B cell (primary cell): ENCODE measurements at regions of chr11 and their contacts with region 1.

Region 1: GRCh38 chr11:71372693-71373657 is 75.2 kb downstream of the DHCR7 start:
- DNase-seq: no peak
- ATAC-seq: no peak
- H3K4me3 ChIP-seq: peak overlapping the region in 2 of 5 experiments; percentile 46 to 49
- H3K4me3 Mint-ChIP-seq: peak overlapping the region; percentile 71
- H3K27ac ChIP-seq: no peak overlapping the region
- H3K27ac Mint-ChIP-seq: peak overlapping the region; percentile 62
- H3K4me1 ChIP-seq: peaks cover 62 to 69% of the 10 kb centered on the region in 2 donors
- H3K4me1 Mint-ChIP-seq: peaks cover 68% of the 10 kb centered on the region
- H3K27me3 ChIP-seq: peaks cover 0 to 16% (median 7%) of the 10 kb centered on the region in 4 experiments
- H3K27me3 Mint-ChIP-seq: peaks cover 24% of the 10 kb centered on the region
- CTCF ChIP-seq: no peak

Region 2: DNA sequence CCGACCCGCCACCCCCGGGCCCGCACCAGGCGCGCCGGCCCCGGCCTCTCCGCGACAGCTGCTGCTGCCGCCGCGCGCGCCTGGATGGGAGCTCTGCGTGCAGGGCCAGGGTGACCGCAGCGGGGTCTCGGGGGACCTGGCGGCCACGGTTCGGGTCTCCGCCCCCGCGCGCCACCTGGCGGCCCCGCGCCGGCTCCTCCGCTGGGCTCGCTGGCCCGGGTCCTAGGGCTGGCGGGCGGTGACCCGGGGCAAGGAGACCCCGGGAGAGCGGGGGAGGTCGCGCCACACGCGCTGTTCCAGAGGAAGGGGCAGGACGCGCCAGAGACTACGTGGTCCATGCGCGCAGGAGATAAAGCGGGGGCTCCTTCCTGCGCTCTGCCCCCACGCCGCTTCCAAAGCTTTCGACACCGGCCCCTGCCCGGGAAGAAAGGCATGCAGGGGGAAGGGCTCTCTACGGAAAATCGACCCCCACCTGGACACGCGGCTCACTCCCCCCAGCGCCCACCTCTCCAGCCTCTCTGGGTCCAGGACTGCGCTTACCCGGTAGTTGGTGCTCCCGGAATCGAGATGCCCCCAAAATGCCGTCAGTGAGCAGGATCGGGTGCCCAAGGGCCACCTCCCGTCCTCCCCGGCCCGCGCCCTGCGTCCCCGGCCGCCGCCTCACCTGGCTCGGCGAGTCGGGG is 121.1 kb before region 1 on chr11:
- CTCF ChIA-PET with region 1: interaction called, 3 read pairs
- POLR2A ChIA-PET with region 1: no interaction called
- intact Hi-C with region 1: loop called (anchors 10 kb)
- DNase-seq: peak; percentile 76
- ATAC-seq: peak; percentile 88
- H3K4me3 ChIP-seq: peak overlapping the region in 4 of 5 experiments; percentile 29 to 58 (median 39)
- H3K4me3 Mint-ChIP-seq: peak overlapping the region; percentile 77
- H3K27ac ChIP-seq: no peak overlapping the region
- H3K27ac Mint-ChIP-seq: no peak overlapping the region
- H3K4me1 ChIP-seq: peaks cover 30 to 34% of the 10 kb centered on the region in 2 donors
- H3K4me1 Mint-ChIP-seq: peaks cover 21% of the 10 kb centered on the region
- H3K27me3 ChIP-seq: peaks cover 0 to 63% (median 43%) of the 10 kb centered on the region in 4 experiments
- H3K27me3 Mint-ChIP-seq: peaks cover 63% of the 10 kb centered on the region
- CTCF ChIP-seq: no peak

Region 3: DNA sequence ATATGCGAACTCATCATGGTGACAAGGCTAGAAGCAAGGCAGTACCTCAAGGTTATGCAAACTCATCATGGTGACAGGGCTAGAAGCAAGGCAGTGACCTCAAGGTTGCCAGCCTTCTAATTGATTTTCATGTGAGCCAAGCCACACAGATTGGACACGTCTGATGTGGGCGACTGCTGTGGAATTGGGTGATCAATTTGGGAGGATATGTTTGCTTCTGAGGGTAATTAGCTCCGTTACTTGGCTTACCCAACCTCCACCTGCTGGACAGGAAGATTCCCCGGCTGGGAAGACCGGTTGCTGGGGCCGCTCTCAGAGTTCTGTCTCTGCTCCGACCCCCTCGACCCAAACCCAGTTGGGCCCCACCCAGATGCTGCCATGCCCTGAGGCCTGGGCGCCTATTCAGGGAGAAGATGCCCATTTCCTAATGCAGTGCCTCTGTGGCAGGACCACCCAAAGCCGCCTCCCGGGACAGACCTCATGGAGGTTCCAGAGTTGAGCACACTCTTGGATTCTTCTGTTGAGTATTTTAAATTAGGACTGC is 50.7 kb before region 1 on chr11:
- CTCF ChIA-PET with region 1: no interaction called
- POLR2A ChIA-PET with region 1: no interaction called
- intact Hi-C with region 1: no loop called
- DNase-seq: no peak
- ATAC-seq: no peak
- H3K4me3 ChIP-seq: no peak overlapping the region
- H3K4me3 Mint-ChIP-seq: no peak overlapping the region
- H3K27ac ChIP-seq: no peak overlapping the region
- H3K27ac Mint-ChIP-seq: no peak overlapping the region
- H3K4me1 ChIP-seq: no peaks in the 10 kb centered on the region
- H3K4me1 Mint-ChIP-seq: no peaks in the 10 kb centered on the region
- H3K27me3 ChIP-seq: peaks cover 0 to 2% (median 0%) of the 10 kb centered on the region in 4 experiments
- H3K27me3 Mint-ChIP-seq: peaks cover 21% of the 10 kb centered on the region
- CTCF ChIP-seq: no peak

Region 4: GRCh38 chr11:71336176-71336995 is 36.6 kb before region 1 on chr11:
- CTCF ChIA-PET with region 1: no interaction called
- POLR2A ChIA-PET with region 1: no interaction called
- intact Hi-C with region 1: no loop called
- DNase-seq: no peak
- ATAC-seq: no peak
- H3K4me3 ChIP-seq: no peak overlapping the region
- H3K4me3 Mint-ChIP-seq: no peak overlapping the region
- H3K27ac ChIP-seq: no peak overlapping the region
- H3K27ac Mint-ChIP-seq: no peak overlapping the region
- H3K4me1 ChIP-seq: no peaks in the 10 kb centered on the region
- H3K4me1 Mint-ChIP-seq: no peaks in the 10 kb centered on the region
- H3K27me3 ChIP-seq: peaks cover 0 to 10% (median 0%) of the 10 kb centered on the region in 4 experiments
- H3K27me3 Mint-ChIP-seq: peaks cover 7% of the 10 kb centered on the region
- CTCF ChIP-seq: no peak

Region 5: DNA sequence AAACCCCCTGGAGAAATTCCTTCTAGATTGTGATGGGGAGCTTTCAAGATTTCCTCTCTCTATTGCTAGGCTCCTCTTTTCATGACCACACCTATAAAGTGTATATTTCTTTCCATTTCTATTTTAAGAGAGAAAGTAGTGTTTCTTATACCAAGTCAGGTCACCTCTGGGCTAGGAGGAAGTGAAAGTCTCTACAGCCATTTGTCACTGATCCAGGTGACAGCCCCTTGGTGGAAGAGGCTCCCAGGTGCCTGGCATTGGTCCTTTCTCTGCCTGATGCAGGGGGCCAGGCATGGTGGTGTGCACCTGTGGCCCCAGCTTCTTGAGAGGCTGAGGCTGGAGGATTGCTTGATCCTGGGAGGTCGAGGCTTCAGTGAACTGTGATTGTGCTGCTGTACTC is 10.5 kb after region 1 on chr11:
- CTCF ChIA-PET with region 1: interaction called, 5 read pairs
- POLR2A ChIA-PET with region 1: no interaction called
- intact Hi-C with region 1: loop called (anchors 1 kb)
- DNase-seq: peak; percentile 76
- ATAC-seq: peak; percentile 71
- H3K4me3 ChIP-seq: no peak overlapping the region
- H3K4me3 Mint-ChIP-seq: peak overlapping the region; percentile 56
- H3K27ac ChIP-seq: peak overlapping the region in 1 of 2 donors; percentile 64
- H3K27ac Mint-ChIP-seq: peak overlapping the region; percentile 68
- H3K4me1 ChIP-seq: peaks cover 71 to 72% of the 10 kb centered on the region in 2 donors
- H3K4me1 Mint-ChIP-seq: peaks cover 65% of the 10 kb centered on the region
- H3K27me3 ChIP-seq: no peaks in the 10 kb centered on the region
- H3K27me3 Mint-ChIP-seq: peaks cover 6% of the 10 kb centered on the region
- CTCF ChIP-seq: no peak

Region 6: GRCh38 chr11:71420455-71421241 is 47.7 kb after region 1 on chr11:
- CTCF ChIA-PET with region 1: no interaction called
- POLR2A ChIA-PET with region 1: no interaction called
- intact Hi-C with region 1: loop called (anchors 5 kb)
- DNase-seq: peak; percentile 66
- ATAC-seq: no peak
- H3K4me3 ChIP-seq: no peak overlapping the region
- H3K4me3 Mint-ChIP-seq: no peak overlapping the region
- H3K27ac ChIP-seq: no peak overlapping the region
- H3K27ac Mint-ChIP-seq: no peak overlapping the region
- H3K4me1 ChIP-seq: peaks cover 33 to 48% of the 10 kb centered on the region in 2 donors
- H3K4me1 Mint-ChIP-seq: peaks cover 58% of the 10 kb centered on the region
- H3K27me3 ChIP-seq: no peaks in the 10 kb centered on the region
- H3K27me3 Mint-ChIP-seq: no peaks in the 10 kb centered on the region
- CTCF ChIP-seq: peak; percentile 77